ENCODE measurements at regions of chr17 and their contacts with region 1.

Region 1: DNA sequence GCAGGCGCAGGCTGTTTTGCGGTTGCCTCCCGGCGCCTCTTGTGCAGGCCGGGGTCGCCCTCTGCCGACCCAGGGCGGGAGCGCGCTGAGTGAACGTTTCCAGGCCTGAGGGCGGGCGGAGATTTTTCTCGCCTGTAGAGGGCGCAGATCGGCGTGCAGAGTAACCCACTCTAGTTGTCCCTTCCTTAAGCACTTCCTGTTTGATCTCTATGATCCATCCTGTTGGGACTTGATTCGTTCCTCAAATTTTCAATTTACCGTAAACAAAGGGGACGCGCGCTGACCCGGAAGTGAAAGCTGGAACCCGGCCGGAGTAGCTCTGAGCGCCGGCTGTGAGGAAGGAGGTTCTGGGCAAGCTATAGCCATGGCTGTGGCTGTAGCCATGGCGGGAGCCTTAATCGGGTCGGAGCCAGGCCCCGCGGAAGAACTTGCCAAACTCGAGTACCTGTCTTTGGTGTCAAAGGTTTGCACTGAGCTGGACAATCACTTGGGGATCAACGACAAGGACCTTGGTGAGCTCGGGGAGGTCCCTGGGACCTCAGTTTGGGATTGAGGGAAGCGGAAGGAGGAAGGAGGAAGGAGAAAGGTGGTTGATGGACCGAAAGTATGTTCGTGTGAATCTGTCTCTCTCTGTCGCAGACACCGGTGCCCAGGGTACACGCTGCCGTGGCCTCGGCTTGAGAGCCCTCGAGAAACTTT is at the start of gene DHX8:
- DNase-seq: peak; percentile 97 to 99 (median 99)
- ATAC-seq: peak; percentile 98 to 99
- H3K4me3 ChIP-seq: peak within 1 kb of the TSS; percentile 97
- H3K27ac ChIP-seq: peak within 1 kb of the TSS; percentile 76
- H3K4me1 ChIP-seq: no peaks in the 10 kb centered on the region
- H3K27me3 ChIP-seq: no peaks in the 10 kb centered on the region
- total RNA-seq, gene DHX8: 23.1 to 38.8 (median 29.2) TPM

Region 2: GRCh38 chr17:43381204-43381603 is 102.6 kb before region 1 on chr17:
- intact Hi-C with region 1: no loop called
- DNase-seq: no peak
- ATAC-seq: no peak
- H3K4me3 ChIP-seq: no peak overlapping the region
- H3K27ac ChIP-seq: no peak overlapping the region
- H3K4me1 ChIP-seq: no peaks in the 10 kb centered on the region
- H3K27me3 ChIP-seq: no peaks in the 10 kb centered on the region

Region 3: GRCh38 chr17:43393944-43394482 is 89.8 kb before region 1 on chr17:
- intact Hi-C with region 1: loop called (anchors 1 to 2 kb)
- DNase-seq: peak; percentile 86 to 93 (median 91)
- ATAC-seq: peak; percentile 54 to 56
- H3K4me3 ChIP-seq: no peak overlapping the region
- H3K27ac ChIP-seq: peak overlapping the region; percentile 50
- H3K4me1 ChIP-seq: no peaks in the 10 kb centered on the region
- H3K27me3 ChIP-seq: no peaks in the 10 kb centered on the region

Region 4: GRCh38 chr17:43406676-43407645 is 76.9 kb before region 1 on chr17:
- intact Hi-C with region 1: no loop called
- DNase-seq: no peak
- ATAC-seq: peak; percentile 43 to 46
- H3K4me3 ChIP-seq: no peak overlapping the region
- H3K27ac ChIP-seq: no peak overlapping the region
- H3K4me1 ChIP-seq: peaks cover 16% of the 10 kb centered on the region
- H3K27me3 ChIP-seq: no peaks in the 10 kb centered on the region

Measured in right cardiac atrium (tissue), 5 donors.